MCF 10A (cell line): ENCODE measurements at regions of chr7 and their contacts with region 1.

Region 1: DNA sequence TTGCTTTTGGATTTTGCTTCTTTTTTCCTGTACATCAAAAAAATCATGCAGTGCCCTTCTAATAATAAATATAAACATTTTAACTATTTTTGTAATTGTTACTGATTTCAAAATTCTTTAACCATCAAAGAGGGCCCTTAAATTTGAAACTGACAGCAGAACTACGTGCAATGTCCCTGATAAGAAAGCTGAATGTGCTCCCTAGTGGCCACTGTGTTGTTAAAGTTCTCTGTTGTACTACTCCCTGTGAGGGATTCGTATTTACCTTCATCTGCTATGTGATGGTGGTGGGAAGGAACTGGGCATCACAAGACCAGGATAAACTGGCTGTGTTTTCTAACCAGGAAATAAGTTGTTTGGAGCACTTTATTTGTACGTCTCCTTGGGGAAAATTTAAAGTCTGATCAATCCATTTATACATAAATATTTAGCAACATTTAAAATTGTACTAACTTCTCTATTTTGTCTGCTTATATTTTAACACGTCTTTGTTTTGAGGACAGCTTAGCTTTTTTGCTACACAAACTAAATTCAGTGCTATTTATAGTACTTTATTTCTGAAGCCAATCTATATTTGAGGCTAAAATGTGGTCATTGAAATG is 322.4 kb downstream of the HGF start:
- DNase-seq: peak; percentile 72
- H3K4me3 Mint-ChIP-seq: no peak overlapping the region
- H3K27ac Mint-ChIP-seq: no peak overlapping the region
- H3K4me1 Mint-ChIP-seq: no peaks in the 10 kb centered on the region
- H3K27me3 Mint-ChIP-seq: no peaks in the 10 kb centered on the region
- CTCF ChIP-seq: peak; percentile 75

Region 2: DNA sequence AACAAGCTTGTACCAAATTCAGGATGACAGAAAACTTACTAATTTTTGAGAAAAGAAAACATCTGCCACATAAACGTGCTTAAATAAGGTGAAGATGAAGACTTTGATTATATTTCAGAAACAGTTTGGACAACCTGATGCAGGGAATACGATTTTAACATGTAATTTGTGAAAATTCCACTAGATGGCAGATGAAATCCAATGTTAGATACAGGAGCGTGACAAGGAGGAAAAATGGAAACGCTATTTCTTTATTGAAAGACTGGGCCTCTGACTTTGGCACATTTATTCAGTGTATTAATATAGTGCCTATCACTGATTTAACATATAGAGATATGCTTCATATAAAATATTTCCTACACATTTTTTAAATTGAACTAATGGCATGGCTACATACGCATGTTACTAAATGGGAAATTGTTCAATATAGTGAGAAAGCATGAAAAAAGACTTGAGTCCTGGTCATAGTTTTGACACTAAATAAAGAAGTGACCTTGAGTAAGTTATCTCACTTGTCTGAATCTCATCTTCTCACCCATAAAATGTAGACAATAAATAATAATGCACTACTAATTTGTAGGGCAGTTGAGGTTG is 748.3 kb before region 1 on chr7:
- CTCF ChIA-PET with region 1: interaction called, 11 read pairs
- POLR2A ChIA-PET with region 1: no interaction called
- intact Hi-C with region 1: no loop called
- DNase-seq: peak; percentile 69
- H3K4me3 Mint-ChIP-seq: no peak overlapping the region
- H3K27ac Mint-ChIP-seq: peak overlapping the region; percentile 50
- H3K4me1 Mint-ChIP-seq: peaks cover 10% of the 10 kb centered on the region
- H3K27me3 Mint-ChIP-seq: no peaks in the 10 kb centered on the region
- CTCF ChIP-seq: peak; percentile 63

Region 3: DNA sequence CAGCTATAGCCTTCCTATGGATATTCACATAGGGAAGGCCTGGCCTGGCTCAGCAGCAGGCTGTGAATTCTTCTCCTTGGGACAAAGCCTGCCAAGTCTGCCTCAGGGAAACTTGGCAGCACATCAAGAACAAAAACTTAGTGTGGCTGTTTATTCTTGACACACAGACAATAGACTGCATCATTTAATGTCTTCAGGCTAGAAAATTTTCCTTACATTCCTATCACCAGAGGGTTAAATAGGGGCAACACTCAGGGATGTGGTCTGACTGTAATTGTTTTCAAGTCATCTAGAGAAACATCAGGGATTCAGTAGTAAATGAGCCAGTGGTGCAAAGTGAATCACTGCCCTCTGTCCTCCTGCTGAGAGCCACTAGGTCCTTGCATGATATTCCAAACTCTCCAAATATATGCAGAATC is 665.9 kb before region 1 on chr7:
- CTCF ChIA-PET with region 1: no interaction called
- POLR2A ChIA-PET with region 1: no interaction called
- intact Hi-C with region 1: loop called (anchors 5 kb)
- DNase-seq: peak; percentile 96
- H3K4me3 Mint-ChIP-seq: peak overlapping the region; percentile 6
- H3K27ac Mint-ChIP-seq: peak overlapping the region; percentile 57
- H3K4me1 Mint-ChIP-seq: peaks cover 52% of the 10 kb centered on the region
- H3K27me3 Mint-ChIP-seq: no peaks in the 10 kb centered on the region
- CTCF ChIP-seq: no peak

Region 4: DNA sequence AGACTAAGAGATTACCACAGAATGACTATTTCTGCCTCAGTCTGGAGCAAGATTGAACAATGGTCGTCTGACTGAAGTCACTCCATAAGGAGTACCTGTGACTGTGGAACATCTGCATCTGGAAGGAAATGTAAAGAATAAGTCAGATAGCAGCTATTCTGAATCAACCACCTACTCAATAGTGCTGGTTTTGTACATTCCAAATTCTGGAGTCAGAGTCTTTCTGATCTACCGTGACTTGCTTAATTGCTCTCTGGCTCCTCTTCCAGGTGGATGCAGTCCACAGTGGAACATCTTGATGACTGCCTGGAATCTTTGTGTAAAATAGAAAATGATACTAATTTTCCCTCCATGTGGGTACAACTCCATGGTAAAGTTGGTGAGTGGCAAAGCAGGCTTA is 372.3 kb before region 1 on chr7:
- CTCF ChIA-PET with region 1: interaction called, 3 read pairs
- POLR2A ChIA-PET with region 1: no interaction called
- intact Hi-C with region 1: loop called (anchors 1 kb)
- DNase-seq: peak; percentile 66
- H3K4me3 Mint-ChIP-seq: no peak overlapping the region
- H3K27ac Mint-ChIP-seq: peak overlapping the region; percentile 93
- H3K4me1 Mint-ChIP-seq: peaks cover 23% of the 10 kb centered on the region
- H3K27me3 Mint-ChIP-seq: no peaks in the 10 kb centered on the region
- CTCF ChIP-seq: no peak

Region 5: GRCh38 chr7:81244224-81244623 is 203.2 kb before region 1 on chr7:
- CTCF ChIA-PET with region 1: no interaction called
- POLR2A ChIA-PET with region 1: no interaction called
- intact Hi-C with region 1: loop called (anchors 5 kb)
- DNase-seq: peak; percentile 71
- H3K4me3 Mint-ChIP-seq: no peak overlapping the region
- H3K27ac Mint-ChIP-seq: no peak overlapping the region
- H3K4me1 Mint-ChIP-seq: peaks cover 6% of the 10 kb centered on the region
- H3K27me3 Mint-ChIP-seq: no peaks in the 10 kb centered on the region
- CTCF ChIP-seq: peak; percentile 21

Region 6: GRCh38 chr7:81298951-81299669 is 148.3 kb before region 1 on chr7:
- CTCF ChIA-PET with region 1: interaction called, 3 read pairs
- POLR2A ChIA-PET with region 1: interaction called, 12 read pairs
- intact Hi-C with region 1: no loop called
- DNase-seq: peak; percentile 94
- H3K4me3 Mint-ChIP-seq: peak overlapping the region; percentile 38
- H3K27ac Mint-ChIP-seq: peak overlapping the region; percentile 99
- H3K4me1 Mint-ChIP-seq: peaks cover 43% of the 10 kb centered on the region
- H3K27me3 Mint-ChIP-seq: no peaks in the 10 kb centered on the region
- CTCF ChIP-seq: no peak

Region 7: GRCh38 chr7:81457852-81458522 is 10.5 kb after region 1 on chr7:
- CTCF ChIA-PET with region 1: interaction called, 10 read pairs
- POLR2A ChIA-PET with region 1: interaction called, 3 read pairs
- intact Hi-C with region 1: no loop called
- DNase-seq: peak; percentile 37
- H3K4me3 Mint-ChIP-seq: no peak overlapping the region
- H3K27ac Mint-ChIP-seq: no peak overlapping the region
- H3K4me1 Mint-ChIP-seq: peaks cover 6% of the 10 kb centered on the region
- H3K27me3 Mint-ChIP-seq: no peaks in the 10 kb centered on the region
- CTCF ChIP-seq: peak; percentile 46

Region 8: GRCh38 chr7:82257118-82257695 is 809.8 kb after region 1 on chr7:
- CTCF ChIA-PET with region 1: no interaction called
- POLR2A ChIA-PET with region 1: no interaction called
- intact Hi-C with region 1: no loop called
- DNase-seq: no peak
- H3K4me3 Mint-ChIP-seq: no peak overlapping the region
- H3K27ac Mint-ChIP-seq: no peak overlapping the region
- H3K4me1 Mint-ChIP-seq: no peaks in the 10 kb centered on the region
- H3K27me3 Mint-ChIP-seq: peaks cover 56% of the 10 kb centered on the region
- CTCF ChIP-seq: no peak